HepG2 (cell line): ENCODE measurements at regions of chr18 and their contacts with region 1.

Region 1: GRCh38 chr18:8140841-8141501 is 468.3 kb upstream of the RAB12 start:
- DNase-seq: no peak
- ATAC-seq: no peak
- H3K4me3 ChIP-seq: no peak overlapping the region
- H3K27ac ChIP-seq: no peak overlapping the region
- H3K4me1 ChIP-seq: no peaks in the 10 kb centered on the region
- H3K27me3 ChIP-seq: no peaks in the 10 kb centered on the region
- CTCF ChIP-seq: no peak
- EP300 ChIP-seq: no peak
- POLR2A ChIP-seq: no peak
- RAD21 ChIP-seq: no peak

Region 2: GRCh38 chr18:7840411-7840810 is 300.6 kb before region 1 on chr18:
- CTCF ChIA-PET with region 1: no interaction called
- POLR2A ChIA-PET with region 1: no interaction called
- in situ Hi-C with region 1: no loop called
- intact Hi-C with region 1: no loop called
- DNase-seq: no peak
- ATAC-seq: no peak
- H3K4me3 ChIP-seq: no peak overlapping the region
- H3K27ac ChIP-seq: no peak overlapping the region
- H3K4me1 ChIP-seq: no peaks in the 10 kb centered on the region
- H3K27me3 ChIP-seq: no peaks in the 10 kb centered on the region
- CTCF ChIP-seq: no peak
- EP300 ChIP-seq: no peak
- POLR2A ChIP-seq: no peak
- RAD21 ChIP-seq: no peak

Region 3: DNA sequence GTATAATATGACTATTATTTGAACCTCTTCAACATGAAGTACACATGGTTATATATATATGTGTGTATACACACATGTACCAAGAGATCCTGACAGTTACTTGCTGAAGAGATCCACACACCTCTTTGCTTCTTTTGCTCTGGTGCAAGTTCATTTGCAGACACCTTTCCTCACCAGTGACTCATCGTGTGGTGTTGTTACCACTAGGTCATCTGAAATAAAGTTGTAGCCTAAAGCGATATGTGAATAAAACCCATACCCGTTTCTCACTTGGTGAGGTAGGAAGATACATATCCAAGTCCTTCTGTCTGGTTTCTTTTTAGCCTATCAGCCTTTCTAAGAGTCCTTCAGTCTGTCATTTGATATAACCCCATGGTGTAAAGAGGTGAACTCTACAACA is 88.8 kb after region 1 on chr18:
- CTCF ChIA-PET with region 1: no interaction called
- POLR2A ChIA-PET with region 1: no interaction called
- in situ Hi-C with region 1: loop called (anchors 25 kb)
- intact Hi-C with region 1: no loop called
- DNase-seq: no peak
- ATAC-seq: no peak
- H3K4me3 ChIP-seq: no peak overlapping the region
- H3K27ac ChIP-seq: no peak overlapping the region
- H3K4me1 ChIP-seq: peaks cover 5% of the 10 kb centered on the region; the same call in 1 of the 2 replicates
- H3K27me3 ChIP-seq: no peaks in the 10 kb centered on the region
- CTCF ChIP-seq: no peak
- EP300 ChIP-seq: no peak
- POLR2A ChIP-seq: no peak
- RAD21 ChIP-seq: no peak

Region 4: GRCh38 chr18:8324343-8325065 is 183.5 kb after region 1 on chr18:
- CTCF ChIA-PET with region 1: no interaction called
- POLR2A ChIA-PET with region 1: no interaction called
- in situ Hi-C with region 1: no loop called
- intact Hi-C with region 1: no loop called
- DNase-seq: no peak
- ATAC-seq: no peak; the same call in 2 of the 3 replicates
- H3K4me3 ChIP-seq: no peak overlapping the region
- H3K27ac ChIP-seq: no peak overlapping the region
- H3K4me1 ChIP-seq: peaks cover 11% of the 10 kb centered on the region
- H3K27me3 ChIP-seq: no peaks in the 10 kb centered on the region
- CTCF ChIP-seq: 0 out of 2 replicates have a peak, but pooled peaks have one; percentile 19
- EP300 ChIP-seq: no peak
- POLR2A ChIP-seq: no peak
- RAD21 ChIP-seq: no peak